ENCODE measurements at regions of chr7 and their contacts with region 1.

Region 1: DNA sequence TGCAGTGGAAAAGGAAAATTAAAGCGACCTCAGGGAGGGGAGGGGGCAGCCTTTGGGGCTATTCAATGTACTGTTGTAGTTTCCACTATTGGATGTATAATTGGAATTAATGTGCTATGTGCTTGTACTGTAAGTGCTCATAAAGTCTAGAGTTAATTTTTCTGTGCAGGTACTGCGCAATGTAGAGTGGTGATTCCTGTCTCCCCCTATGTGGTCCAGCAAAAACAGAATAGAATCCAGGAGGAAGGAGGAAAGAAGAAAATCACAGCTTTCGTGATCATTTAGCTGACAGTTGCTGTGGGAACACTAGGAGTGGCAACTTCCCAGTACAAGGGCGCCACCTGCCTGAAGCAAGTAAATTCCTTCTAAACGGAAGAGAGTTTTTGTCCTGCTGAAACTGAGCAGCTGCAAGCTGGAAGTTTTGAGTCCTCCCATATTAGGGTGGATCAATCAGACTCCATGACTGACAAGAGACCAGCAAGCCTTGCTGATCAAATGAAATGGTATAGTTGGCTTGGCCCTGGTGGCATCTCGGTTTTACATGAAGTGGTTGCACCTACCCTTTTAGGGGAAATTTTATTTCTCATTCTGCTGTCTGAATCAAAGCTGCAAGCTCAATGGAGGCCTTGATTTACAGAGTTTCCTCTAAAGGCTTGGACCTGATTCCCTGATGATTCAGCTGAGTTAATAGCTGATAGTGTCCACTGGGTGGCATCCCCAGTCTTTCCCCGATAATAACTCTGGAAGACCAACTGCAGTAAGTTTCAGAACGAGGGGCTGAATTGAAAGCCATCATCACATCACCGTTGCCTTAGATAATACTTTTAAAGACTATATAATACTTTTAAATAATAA is 299.8 kb downstream of the HGF start:
- DNase-seq: peak; percentile 53
- H3K4me3 ChIP-seq: no peak overlapping the region
- H3K27ac ChIP-seq: peak overlapping the region in 1 of 2 experiments; percentile 16; a peak in 1 of 4 replicates
- H3K4me1 ChIP-seq: peaks cover 0 to 10% of the 10 kb centered on the region in 2 experiments; a peak in 2 of 4 replicates
- H3K27me3 ChIP-seq: no peaks in the 10 kb centered on the region
- CTCF ChIP-seq: peak; percentile 92
- EP300 ChIP-seq: no peak
- RAD21 ChIP-seq: peak; percentile 98

Region 2: GRCh38 chr7:80681272-80681885 is 788.7 kb before region 1 on chr7:
- CTCF ChIA-PET with region 1: interaction called, 21 read pairs
- POLR2A ChIA-PET with region 1: no interaction called
- DNase-seq: peak; percentile 38
- H3K4me3 ChIP-seq: no peak overlapping the region
- H3K27ac ChIP-seq: no peak overlapping the region
- H3K4me1 ChIP-seq: no peaks in the 10 kb centered on the region
- H3K27me3 ChIP-seq: no peaks in the 10 kb centered on the region
- CTCF ChIP-seq: peak; percentile 80
- EP300 ChIP-seq: no peak
- RAD21 ChIP-seq: peak; percentile 58

Region 3: GRCh38 chr7:80699045-80699638 is 771.0 kb before region 1 on chr7:
- CTCF ChIA-PET with region 1: interaction called, 105 read pairs
- POLR2A ChIA-PET with region 1: no interaction called
- DNase-seq: peak; percentile 36
- H3K4me3 ChIP-seq: no peak overlapping the region
- H3K27ac ChIP-seq: no peak overlapping the region
- H3K4me1 ChIP-seq: peaks cover 8 to 16% of the 10 kb centered on the region in 2 experiments; a peak in 3 of 4 replicates
- H3K27me3 ChIP-seq: no peaks in the 10 kb centered on the region
- CTCF ChIP-seq: peak; percentile 91
- EP300 ChIP-seq: no peak
- RAD21 ChIP-seq: peak; percentile 99

Region 4: GRCh38 chr7:81173766-81174281 is 296.3 kb before region 1 on chr7:
- CTCF ChIA-PET with region 1: no interaction called
- POLR2A ChIA-PET with region 1: no interaction called
- DNase-seq: no peak
- H3K4me3 ChIP-seq: no peak overlapping the region
- H3K27ac ChIP-seq: peak overlapping the region in 1 of 2 experiments; percentile 55; a peak in 1 of 4 replicates
- H3K4me1 ChIP-seq: no peaks in the 10 kb centered on the region; a peak in 2 of 4 replicates
- H3K27me3 ChIP-seq: no peaks in the 10 kb centered on the region
- CTCF ChIP-seq: no peak
- EP300 ChIP-seq: no peak
- RAD21 ChIP-seq: no peak

Region 5: DNA sequence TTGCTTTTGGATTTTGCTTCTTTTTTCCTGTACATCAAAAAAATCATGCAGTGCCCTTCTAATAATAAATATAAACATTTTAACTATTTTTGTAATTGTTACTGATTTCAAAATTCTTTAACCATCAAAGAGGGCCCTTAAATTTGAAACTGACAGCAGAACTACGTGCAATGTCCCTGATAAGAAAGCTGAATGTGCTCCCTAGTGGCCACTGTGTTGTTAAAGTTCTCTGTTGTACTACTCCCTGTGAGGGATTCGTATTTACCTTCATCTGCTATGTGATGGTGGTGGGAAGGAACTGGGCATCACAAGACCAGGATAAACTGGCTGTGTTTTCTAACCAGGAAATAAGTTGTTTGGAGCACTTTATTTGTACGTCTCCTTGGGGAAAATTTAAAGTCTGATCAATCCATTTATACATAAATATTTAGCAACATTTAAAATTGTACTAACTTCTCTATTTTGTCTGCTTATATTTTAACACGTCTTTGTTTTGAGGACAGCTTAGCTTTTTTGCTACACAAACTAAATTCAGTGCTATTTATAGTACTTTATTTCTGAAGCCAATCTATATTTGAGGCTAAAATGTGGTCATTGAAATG is 22.6 kb before region 1 on chr7:
- CTCF ChIA-PET with region 1: interaction called, 21 read pairs
- POLR2A ChIA-PET with region 1: no interaction called
- DNase-seq: peak; percentile 50
- H3K4me3 ChIP-seq: no peak overlapping the region
- H3K27ac ChIP-seq: no peak overlapping the region
- H3K4me1 ChIP-seq: no peaks in the 10 kb centered on the region; a peak in 1 of 4 replicates
- H3K27me3 ChIP-seq: no peaks in the 10 kb centered on the region
- CTCF ChIP-seq: peak; percentile 79
- EP300 ChIP-seq: no peak
- RAD21 ChIP-seq: peak; percentile 97

Region 6: DNA sequence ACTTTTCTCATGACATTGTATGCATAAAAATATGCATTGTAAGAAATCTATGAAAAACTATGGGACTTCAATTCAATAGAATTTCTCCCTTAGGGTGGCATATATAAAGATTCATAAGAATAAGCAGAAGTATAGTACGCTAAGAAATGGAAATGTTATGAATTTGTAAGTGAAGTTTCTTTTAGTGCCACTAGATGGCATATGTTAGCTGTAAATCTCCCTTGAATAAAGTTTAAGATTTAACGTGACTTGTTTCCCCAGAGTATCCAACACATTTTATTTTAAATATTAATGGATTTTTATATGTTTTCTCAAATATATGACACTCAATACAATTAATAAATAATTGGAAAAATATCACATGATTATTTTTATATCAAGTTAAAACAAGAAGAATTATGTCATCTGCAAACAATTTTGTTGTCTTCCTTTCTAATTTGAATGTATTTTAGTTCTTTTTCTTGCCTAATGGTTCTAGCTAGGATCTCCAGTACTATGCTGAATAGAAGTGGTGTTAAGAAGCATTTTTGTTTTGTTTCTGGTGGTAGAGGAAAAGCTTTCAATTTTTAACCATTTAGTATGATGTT is 12.6 kb after region 1 on chr7:
- CTCF ChIA-PET with region 1: interaction called, 58 read pairs
- POLR2A ChIA-PET with region 1: no interaction called
- DNase-seq: peak; percentile 35
- H3K4me3 ChIP-seq: no peak overlapping the region
- H3K27ac ChIP-seq: no peak overlapping the region
- H3K4me1 ChIP-seq: peaks cover 0 to 3% of the 10 kb centered on the region in 2 experiments; a peak in 2 of 4 replicates
- H3K27me3 ChIP-seq: no peaks in the 10 kb centered on the region
- CTCF ChIP-seq: peak; percentile 80
- EP300 ChIP-seq: no peak
- RAD21 ChIP-seq: peak; percentile 84

Region 7: DNA sequence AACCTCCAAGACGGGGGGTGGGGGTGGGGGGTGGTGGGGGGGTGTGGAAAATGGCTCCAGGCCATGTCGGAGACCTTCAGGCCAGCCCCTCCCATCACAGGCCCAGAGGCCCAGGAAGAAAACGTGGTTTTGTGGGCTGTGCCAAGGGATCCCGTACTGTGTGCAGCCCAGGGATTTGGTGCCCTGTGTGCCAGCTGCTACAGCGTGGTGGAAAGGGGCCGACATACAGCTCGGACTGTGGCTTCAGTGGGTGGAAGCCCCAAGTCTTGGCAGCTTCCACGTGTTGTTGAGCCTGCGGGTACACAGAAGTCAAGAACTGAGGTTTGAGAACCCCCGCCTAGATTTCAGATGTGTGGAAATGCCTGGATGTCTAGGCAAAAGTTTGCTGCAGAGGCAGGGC is 40.0 kb after region 1 on chr7:
- CTCF ChIA-PET with region 1: no interaction called
- POLR2A ChIA-PET with region 1: no interaction called
- DNase-seq: no peak
- H3K4me3 ChIP-seq: no peak overlapping the region
- H3K27ac ChIP-seq: no peak overlapping the region
- H3K4me1 ChIP-seq: no peaks in the 10 kb centered on the region; a peak in 1 of 4 replicates
- H3K27me3 ChIP-seq: no peaks in the 10 kb centered on the region
- CTCF ChIP-seq: no peak
- EP300 ChIP-seq: no peak
- RAD21 ChIP-seq: no peak